ENCODE measurements at regions of chr10 and their contacts with region 1.

Region 1: DNA sequence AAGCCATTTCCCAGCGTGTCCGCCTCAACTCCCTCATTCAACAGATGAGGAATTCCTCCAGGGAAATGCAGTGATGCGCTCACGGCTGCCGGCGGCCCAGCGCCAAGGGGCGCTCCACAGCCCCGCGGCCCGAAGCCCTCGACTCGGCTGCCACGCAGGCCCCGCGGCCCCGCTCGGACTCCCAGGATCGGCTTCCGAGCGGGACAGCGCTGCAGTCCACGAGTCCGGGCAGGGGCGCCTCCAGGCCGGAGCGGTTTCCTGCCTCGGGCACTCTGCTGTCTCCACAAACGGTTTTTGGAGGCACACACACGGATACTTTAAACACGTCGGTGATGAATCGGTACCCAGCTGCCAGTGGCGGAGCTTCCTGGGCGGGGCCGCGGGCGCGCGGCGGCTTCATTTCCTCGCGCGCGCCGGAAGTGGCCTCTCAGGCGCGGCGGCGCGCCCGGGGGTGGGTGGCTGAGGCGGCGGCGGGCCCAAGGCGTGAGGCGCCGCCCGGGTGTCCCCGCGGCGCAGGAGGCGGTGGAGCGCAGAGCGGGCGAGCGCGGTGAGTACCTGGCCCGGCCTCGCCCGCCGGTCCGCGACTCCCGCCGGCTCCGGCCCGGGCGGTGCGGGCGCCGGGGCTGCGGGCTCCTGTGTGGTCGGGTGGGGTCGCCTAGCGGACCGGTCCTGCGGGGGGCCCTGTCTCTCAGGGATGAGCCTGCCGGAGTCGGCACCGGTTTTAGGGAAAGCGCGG is at the start of gene CSGALNACT2:
- DNase-seq: peak; percentile 87 to 97 (median 95)
- H3K4me3 ChIP-seq: peak within 1 kb of the TSS; percentile 78 to 96 (median 90)
- H3K27ac ChIP-seq: peak within 1 kb of the TSS; percentile 83 to 87
- H3K4me1 ChIP-seq: peaks cover 19 to 67% (median 43%) of the 10 kb centered on the region in 4 experiments
- H3K27me3 ChIP-seq: no peaks in the 10 kb centered on the region

Region 2: GRCh38 chr10:43120929-43121314 is 17.3 kb before region 1 on chr10:
- CTCF ChIA-PET with region 1: interaction called, 31 read pairs
- POLR2A ChIA-PET with region 1: interaction called, 26 read pairs
- DNase-seq: peak; percentile 92 to 99 (median 98)
- H3K4me3 ChIP-seq: peak overlapping the region in 3 of 7 experiments; percentile 7 to 30 (median 14)
- H3K27ac ChIP-seq: peak overlapping the region; percentile 66 to 69
- H3K4me1 ChIP-seq: peaks cover 10 to 55% (median 41%) of the 10 kb centered on the region in 4 experiments
- H3K27me3 ChIP-seq: no peaks in the 10 kb centered on the region

Region 3: DNA sequence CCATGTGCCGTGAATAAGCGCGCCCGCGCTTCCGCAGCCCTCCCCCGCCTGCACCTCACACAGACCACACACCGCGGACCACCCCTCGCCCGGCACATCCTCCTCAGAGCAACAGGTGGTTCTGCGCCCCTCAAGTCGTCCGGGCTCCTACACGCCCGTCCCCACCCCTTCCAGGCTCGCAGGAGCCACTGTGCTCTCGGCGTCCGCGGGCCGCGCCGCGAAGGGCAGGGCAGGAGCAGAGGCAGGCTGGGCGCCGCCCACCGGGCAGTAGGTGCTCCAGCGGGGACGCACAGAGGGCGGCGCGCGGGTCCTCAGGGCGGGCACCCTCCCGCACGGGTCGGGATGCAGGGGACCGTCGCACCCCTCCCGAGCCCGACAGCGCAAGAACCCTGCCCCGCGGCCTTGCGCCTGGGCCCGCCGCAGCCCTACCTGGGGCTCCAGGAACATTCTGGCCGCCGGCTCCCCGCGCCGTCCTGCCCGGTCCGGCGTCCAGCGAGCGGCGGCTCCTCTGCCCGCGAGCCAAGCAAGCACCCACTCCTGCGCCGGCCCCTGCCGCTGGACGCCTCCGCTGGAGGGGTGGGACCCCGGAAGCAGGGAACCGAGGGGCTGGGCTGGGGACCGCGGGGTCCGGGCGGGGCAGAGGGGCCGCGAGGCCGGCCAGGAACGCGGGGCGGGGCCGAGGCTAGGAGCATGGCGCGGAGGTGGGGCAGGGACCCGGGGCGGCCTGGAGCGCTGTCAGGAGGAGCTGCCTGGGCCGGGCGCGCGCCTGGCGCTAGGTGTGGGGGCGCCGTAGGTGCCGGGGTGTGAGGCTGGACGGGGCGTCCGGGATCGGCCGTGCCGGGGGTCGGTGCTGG is 91.2 kb after region 1 on chr10:
- CTCF ChIA-PET with region 1: no interaction called
- POLR2A ChIA-PET with region 1: no interaction called
- DNase-seq: peak; percentile 25 to 71 (median 69)
- H3K4me3 ChIP-seq: peak overlapping the region in 6 of 7 experiments; percentile 42 to 65 (median 47)
- H3K27ac ChIP-seq: no peak overlapping the region
- H3K4me1 ChIP-seq: peaks cover 0 to 37% (median 34%) of the 10 kb centered on the region in 4 experiments
- H3K27me3 ChIP-seq: peaks cover 0 to 33% (median 4%) of the 10 kb centered on the region in 5 experiments

Region 4: DNA sequence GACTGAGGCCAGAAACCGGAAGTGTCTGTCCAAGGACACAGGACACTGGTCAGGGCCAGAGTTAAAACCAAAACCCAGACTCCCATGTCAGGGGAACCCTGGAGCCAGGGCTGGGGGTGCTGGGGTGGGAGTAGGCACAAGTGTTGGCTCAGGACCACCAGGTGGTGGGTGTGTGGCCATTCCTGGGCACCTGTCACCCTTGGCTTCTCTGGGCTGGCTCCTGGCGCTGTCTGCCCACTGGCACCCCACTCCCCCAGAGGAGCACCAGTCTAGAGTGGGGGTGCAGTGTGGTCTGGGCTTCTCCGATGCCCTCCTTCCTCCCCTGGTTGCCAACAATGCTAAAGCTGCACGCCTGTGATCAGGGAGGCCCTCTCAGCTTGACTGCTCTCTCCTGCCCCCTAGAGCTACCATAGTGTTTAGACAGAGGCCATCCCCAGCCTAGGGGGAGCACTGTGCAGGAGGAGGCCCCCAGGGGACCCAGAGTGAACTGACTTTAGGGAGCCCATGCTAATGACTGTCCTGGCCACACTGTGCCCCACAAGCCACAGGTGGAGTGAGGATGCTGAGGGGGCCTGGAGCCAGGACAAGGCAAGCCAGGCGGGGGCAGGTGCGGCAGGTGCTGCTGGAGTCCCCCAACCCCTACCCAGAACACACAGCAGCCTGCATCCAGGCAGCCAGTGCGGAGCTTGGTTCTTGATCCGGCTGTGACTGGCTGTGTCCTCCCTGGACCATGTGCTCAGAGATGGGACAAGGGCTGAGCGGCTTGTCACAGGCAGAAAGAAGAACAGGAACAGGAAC is 117.6 kb after region 1 on chr10:
- CTCF ChIA-PET with region 1: no interaction called
- POLR2A ChIA-PET with region 1: no interaction called
- DNase-seq: peak in 2 of 3 donors; percentile 59 to 64
- H3K4me3 ChIP-seq: no peak overlapping the region
- H3K27ac ChIP-seq: no peak overlapping the region
- H3K4me1 ChIP-seq: peaks cover 0 to 34% (median 22%) of the 10 kb centered on the region in 4 experiments
- H3K27me3 ChIP-seq: no peaks in the 10 kb centered on the region

Measured in common myeloid progenitor, CD34-positive (primary cell).